ENCODE measurements at regions of chr22 and their contacts with region 1.

Region 1: GRCh38 chr22:21952586-21953571 is at the start of gene PPM1F:
- DNase-seq: peak; percentile 92
- H3K4me3 Mint-ChIP-seq: peak within 1 kb of the TSS; percentile 78
- H3K27ac Mint-ChIP-seq: peak within 1 kb of the TSS; percentile 64
- H3K4me1 Mint-ChIP-seq: peaks cover 10% of the 10 kb centered on the region
- H3K27me3 Mint-ChIP-seq: no peaks in the 10 kb centered on the region
- total RNA-seq, gene PPM1F: 11.9 to 12.5 TPM

Region 2: DNA sequence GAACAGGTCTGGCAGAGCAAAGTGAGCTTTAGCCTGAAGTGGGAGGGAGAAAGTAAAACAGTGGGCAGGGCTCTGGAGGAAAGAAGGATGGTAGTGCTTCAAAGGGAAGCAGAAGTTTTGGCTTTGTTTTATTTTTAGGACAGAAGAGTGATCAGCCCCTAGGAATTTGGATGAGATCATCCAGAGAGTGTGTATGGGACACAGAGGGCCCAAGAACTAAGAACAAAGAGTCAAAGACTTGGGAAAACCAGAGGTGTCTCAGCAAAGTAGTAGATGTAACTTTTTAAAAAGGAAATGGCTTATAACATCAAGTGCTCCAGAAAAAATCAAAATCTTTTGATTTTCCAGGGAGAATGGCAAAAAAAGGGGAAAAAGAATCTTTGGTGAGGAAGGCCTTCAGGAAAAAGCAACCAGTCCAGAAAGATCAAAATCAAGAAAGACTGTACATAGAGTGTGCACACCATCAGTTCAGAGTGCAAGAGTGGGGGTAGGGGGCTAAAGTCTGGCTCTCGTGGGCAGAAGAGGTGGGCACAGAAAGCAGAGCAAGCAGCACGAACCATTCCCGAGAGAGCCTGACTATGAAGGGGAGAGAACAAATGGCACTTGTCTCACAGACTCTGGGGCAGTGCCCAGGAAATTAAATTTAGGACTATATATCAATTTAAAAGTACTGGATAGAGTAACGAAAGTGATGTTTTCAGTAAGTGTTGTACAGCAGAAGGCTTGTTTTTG is 115.5 kb before region 1 on chr22:
- CTCF ChIA-PET with region 1: no interaction called
- POLR2A ChIA-PET with region 1: no interaction called
- DNase-seq: no peak
- H3K4me3 Mint-ChIP-seq: no peak overlapping the region
- H3K27ac Mint-ChIP-seq: no peak overlapping the region
- H3K4me1 Mint-ChIP-seq: peaks cover 15% of the 10 kb centered on the region
- H3K27me3 Mint-ChIP-seq: no peaks in the 10 kb centered on the region

Region 3: GRCh38 chr22:21921729-21922128 is 31.1 kb before region 1 on chr22:
- CTCF ChIA-PET with region 1: no interaction called
- POLR2A ChIA-PET with region 1: no interaction called
- DNase-seq: no peak
- H3K4me3 Mint-ChIP-seq: no peak overlapping the region
- H3K27ac Mint-ChIP-seq: no peak overlapping the region
- H3K4me1 Mint-ChIP-seq: no peaks in the 10 kb centered on the region
- H3K27me3 Mint-ChIP-seq: no peaks in the 10 kb centered on the region

Region 4: DNA sequence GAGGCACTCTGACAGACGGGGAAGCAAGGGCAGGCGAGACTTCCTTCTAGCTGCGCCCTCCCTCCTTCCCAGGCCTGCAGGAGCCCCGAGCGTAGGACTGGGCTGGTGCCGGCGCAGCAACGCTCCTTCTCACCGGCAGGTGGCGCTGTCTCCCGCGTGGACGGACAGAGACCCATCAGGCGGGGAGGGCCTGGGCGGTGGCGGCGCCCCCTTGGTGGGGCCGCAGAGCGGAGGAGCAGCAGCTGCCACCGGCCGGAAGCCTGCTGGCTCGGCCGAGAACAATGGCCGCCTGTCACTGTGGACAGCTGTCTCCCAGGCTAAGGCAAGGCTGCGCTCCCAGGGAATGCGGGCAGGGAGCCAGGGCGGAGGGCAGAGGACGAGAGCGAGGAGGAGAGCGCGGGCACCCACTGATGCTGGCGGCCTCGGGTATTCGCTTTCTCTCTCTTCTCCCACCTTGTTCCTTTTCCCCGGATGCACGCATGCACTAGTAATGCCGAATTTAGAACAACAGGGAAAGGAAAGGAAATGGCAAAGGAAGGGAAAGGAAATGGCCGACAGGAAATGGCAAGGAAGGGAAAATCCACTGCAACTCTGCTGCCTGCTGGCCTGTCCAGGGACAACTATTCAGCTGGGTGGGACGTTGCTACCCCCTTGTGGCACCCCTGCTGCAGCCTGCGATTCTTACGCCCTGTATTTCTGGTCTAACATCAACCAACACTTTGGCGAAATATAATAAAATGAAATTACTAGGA is 14.6 kb before region 1 on chr22:
- CTCF ChIA-PET with region 1: interaction called, 48 read pairs
- POLR2A ChIA-PET with region 1: interaction called, 4 read pairs
- DNase-seq: peak; percentile 89
- H3K4me3 Mint-ChIP-seq: peak overlapping the region; percentile 66
- H3K27ac Mint-ChIP-seq: peak overlapping the region; percentile 3
- H3K4me1 Mint-ChIP-seq: peaks cover 51% of the 10 kb centered on the region
- H3K27me3 Mint-ChIP-seq: no peaks in the 10 kb centered on the region

Region 5: DNA sequence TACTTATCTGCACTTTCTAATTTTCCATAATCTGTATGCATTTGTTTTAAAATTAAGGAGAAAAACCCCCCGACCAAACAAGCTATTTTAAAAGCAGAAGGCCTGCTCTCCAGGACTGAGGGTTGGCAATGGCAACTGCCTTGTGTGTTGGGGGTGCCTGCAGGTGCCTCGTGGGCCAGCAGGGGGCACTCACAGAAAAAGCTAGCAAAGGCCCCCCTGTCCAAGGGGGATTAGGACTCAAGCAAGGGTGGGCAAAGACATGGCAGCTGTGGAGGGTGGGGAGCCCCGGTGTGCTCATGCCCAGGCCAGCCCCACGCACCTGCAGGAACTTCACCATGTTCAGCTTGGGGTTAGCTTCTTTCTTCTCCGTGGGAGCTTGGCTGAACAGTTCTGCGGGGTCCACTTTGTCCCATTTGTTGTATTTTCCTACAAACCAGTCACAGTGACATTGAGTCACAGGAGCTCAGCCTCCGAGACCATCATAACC is 19.5 kb after region 1 on chr22:
- CTCF ChIA-PET with region 1: interaction called, 10 read pairs
- POLR2A ChIA-PET with region 1: interaction called, 4 read pairs
- DNase-seq: peak; percentile 54
- H3K4me3 Mint-ChIP-seq: no peak overlapping the region
- H3K27ac Mint-ChIP-seq: no peak overlapping the region
- H3K4me1 Mint-ChIP-seq: no peaks in the 10 kb centered on the region
- H3K27me3 Mint-ChIP-seq: no peaks in the 10 kb centered on the region

Measured in activated CD4-positive, alpha-beta memory T cell treated with anti-CD3 and anti-CD28 coated beads, Interleukin-2, amount 10 ng/mL, durations not matched to agents 7 days and 5 days (primary cell).